Left cardiac atrium (tissue), 4 donors: ENCODE measurements at regions of chr5 and their contacts with region 1.

Region 1: DNA sequence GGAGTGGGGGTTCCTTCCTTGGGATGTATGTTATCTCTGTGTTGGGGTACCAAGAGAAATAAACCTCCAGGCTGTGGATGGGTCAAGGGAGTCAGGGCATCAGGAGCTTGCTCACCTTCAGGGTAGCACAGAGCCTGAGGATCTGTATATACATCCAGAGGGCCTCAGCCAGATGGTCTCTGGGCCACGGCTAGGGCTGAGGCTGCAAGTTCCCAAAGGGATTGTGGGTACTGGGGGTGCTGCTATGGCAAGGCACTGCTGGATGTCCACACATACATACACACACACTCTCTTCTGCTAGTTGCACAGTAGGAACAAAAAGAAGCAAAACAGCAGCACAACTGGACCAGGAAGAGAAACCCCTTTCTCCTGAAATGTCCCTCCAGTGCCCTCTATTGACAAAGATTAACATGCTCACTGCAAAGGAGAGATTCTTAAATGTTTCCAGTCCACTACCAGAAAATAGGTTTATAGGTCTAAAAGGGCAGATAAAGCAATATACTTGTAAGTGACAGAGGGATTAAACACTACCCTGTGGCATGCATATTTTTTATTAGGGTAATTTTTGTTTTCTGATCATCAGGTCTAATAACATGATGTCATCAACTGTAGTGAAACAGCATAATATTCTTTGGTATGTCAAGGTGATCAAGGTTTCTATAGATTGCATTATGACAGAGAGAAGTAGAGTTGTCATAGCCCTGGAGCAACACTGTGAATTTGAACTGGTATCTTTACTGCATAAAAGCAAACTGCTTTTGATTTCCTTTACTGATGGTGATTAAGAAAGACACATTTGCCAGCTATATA is 56.3 kb upstream of the KCNN2 start:
- DNase-seq: no peak
- ATAC-seq: peak in 1 of 2 donors; percentile 29

Region 2: GRCh38 chr5:114018186-114018585 is 287.4 kb before region 1 on chr5:
- intact Hi-C with region 1: loop called in 1 of 2 experiments (anchors 5 kb)
- DNase-seq: no peak
- ATAC-seq: peak in 1 of 2 donors; percentile 50

Region 3: DNA sequence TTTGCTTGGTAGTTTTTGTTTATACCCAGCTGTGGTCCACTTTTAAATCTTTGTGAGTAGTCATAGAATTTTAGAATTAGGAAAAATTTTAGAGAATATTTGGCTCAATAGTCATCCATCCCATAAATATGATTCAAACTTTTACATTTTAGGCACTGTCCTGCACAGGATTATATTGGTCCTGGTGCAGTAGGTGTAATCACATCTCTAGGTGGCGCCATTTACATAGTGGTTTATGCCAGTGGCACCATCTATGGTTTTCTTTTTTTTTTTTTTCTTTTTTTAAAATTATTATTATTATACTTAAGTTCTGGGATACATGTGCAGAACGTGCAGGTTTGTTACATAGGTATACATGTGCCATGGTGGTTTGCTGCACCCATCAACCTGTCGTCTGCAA is 204.5 kb before region 1 on chr5:
- intact Hi-C with region 1: loop called in 1 of 2 experiments (anchors 5 kb)
- DNase-seq: no peak
- ATAC-seq: no peak

Region 4: GRCh38 chr5:114208588-114208987 is 97.0 kb before region 1 on chr5:
- intact Hi-C with region 1: no loop called
- DNase-seq: no peak
- ATAC-seq: peak; percentile 64 to 82

Region 5: DNA sequence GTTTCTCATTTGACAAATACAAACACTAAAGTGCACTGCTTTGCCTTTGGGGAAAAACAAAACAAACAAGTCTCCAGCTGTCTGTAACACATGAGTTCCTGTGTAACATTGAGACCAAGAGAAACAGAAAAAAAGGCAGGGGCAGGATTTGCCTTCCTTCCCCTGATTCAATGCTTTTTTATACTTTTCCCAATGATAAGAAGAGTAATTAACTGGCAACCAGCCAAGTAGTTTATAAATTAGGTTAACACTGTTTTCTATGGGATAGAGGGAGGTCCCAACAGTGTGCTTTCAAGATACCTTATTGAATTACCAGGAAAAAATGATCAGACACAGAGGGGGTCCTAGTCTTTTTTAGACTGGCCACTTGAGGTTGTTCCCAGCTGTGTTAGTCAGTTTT is 517.3 kb after region 1 on chr5:
- intact Hi-C with region 1: no loop called
- DNase-seq: no peak
- ATAC-seq: no peak